ENCODE measurements at regions of chr10 and their contacts with region 1.

Region 1: GRCh38 chr10:100373298-100374136 is 26.5 kb downstream of the SCD start:
- DNase-seq: peak; percentile 99
- ATAC-seq: peak; percentile 83
- H3K4me3 Mint-ChIP-seq: no peak overlapping the region
- H3K27ac Mint-ChIP-seq: no peak overlapping the region
- H3K4me1 Mint-ChIP-seq: peaks cover 40% of the 10 kb centered on the region
- H3K27me3 Mint-ChIP-seq: no peaks in the 10 kb centered on the region

Region 2: GRCh38 chr10:99732033-99732912 is 641.2 kb before region 1 on chr10 and contains the starts of genes COX15 and CUTC:
- CTCF ChIA-PET with region 1: no interaction called
- POLR2A ChIA-PET with region 1: no interaction called
- intact Hi-C with region 1: loop called in 1 of 2 experiments (anchors 5 kb)
- DNase-seq: peak; percentile 97
- ATAC-seq: peak; percentile 94
- H3K4me3 Mint-ChIP-seq: peak within 1 kb of the TSS; percentile 93
- H3K27ac Mint-ChIP-seq: peak within 1 kb of the TSS; percentile 98
- H3K4me1 Mint-ChIP-seq: peaks cover 32% of the 10 kb centered on the region
- H3K27me3 Mint-ChIP-seq: no peaks in the 10 kb centered on the region
- total RNA-seq, gene COX15: 28.1 to 35.5 TPM
- total RNA-seq, gene CUTC: 24.6 to 35.8 TPM

Region 3: GRCh38 chr10:99926925-99927720 is 446.4 kb before region 1 on chr10:
- CTCF ChIA-PET with region 1: no interaction called
- POLR2A ChIA-PET with region 1: no interaction called
- intact Hi-C with region 1: no loop called
- DNase-seq: no peak
- ATAC-seq: no peak
- H3K4me3 Mint-ChIP-seq: no peak overlapping the region
- H3K27ac Mint-ChIP-seq: no peak overlapping the region
- H3K4me1 Mint-ChIP-seq: peaks cover 17% of the 10 kb centered on the region
- H3K27me3 Mint-ChIP-seq: no peaks in the 10 kb centered on the region

Region 4: DNA sequence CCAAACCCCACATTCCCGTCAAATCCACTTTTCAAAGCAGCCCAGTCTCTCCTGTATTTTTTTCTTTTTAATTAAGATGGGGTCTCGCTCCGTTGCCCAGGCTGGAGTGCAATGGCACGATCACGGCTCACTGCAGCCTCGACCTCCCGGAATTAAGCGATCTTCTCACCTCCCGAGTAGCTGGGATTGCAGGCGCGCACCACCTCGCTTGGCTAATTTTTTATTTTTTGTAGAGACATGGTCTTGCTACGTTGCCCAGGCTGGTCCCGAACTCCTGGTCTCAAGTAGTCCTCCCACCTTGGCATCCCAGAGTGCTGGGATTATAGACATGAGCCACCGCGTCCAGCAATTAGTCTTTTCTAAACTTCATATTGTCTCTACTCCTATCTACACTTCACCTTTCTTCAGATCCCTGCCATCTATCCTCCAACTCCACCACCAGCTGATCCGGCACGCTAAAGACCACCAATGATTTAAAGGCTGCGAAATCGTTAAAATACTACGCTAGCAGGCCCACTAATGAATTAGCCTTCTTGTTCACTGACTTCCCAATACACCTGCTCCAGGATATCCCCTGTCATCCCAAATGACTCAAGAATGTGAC is 143.6 kb before region 1 on chr10:
- CTCF ChIA-PET with region 1: no interaction called
- POLR2A ChIA-PET with region 1: no interaction called
- intact Hi-C with region 1: loop called in 1 of 2 experiments (anchors 2 kb)
- DNase-seq: no peak
- ATAC-seq: no peak
- H3K4me3 Mint-ChIP-seq: peak overlapping the region; percentile 84
- H3K27ac Mint-ChIP-seq: peak overlapping the region; percentile 78
- H3K4me1 Mint-ChIP-seq: peaks cover 19% of the 10 kb centered on the region
- H3K27me3 Mint-ChIP-seq: no peaks in the 10 kb centered on the region

Region 5: DNA sequence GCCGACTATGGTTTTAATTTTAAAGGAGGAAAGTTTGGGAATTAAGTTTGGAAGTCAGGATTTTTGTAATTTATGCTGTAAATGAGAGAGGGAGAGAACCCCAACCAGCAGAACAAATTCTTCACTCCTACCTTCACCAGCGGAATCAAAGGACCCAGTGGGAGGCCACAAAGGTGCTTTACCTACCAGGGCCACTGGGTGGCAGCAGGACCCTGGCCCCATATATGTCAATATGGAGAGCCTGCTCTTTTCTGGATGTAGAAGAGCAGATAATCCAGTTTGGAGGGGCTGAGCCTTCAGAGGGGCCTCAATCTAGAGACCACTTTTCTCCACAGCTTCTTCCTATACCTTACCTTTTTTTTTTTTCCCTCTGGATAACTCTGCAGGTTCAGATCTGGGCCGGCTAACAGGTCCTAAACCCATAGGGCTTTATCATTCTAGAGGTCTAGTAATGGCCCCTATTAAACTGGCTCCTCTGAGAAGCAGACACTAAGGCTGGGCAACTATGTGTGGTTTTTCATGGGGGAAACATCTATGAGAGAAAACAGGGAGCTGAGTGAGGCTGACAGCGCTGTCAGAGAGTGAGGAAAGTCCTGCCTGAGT is 35.0 kb before region 1 on chr10:
- CTCF ChIA-PET with region 1: interaction called, 10 read pairs
- POLR2A ChIA-PET with region 1: no interaction called
- intact Hi-C with region 1: no loop called
- DNase-seq: peak; percentile 90
- ATAC-seq: peak; percentile 85
- H3K4me3 Mint-ChIP-seq: no peak overlapping the region
- H3K27ac Mint-ChIP-seq: no peak overlapping the region
- H3K4me1 Mint-ChIP-seq: no peaks in the 10 kb centered on the region
- H3K27me3 Mint-ChIP-seq: no peaks in the 10 kb centered on the region

Region 6: DNA sequence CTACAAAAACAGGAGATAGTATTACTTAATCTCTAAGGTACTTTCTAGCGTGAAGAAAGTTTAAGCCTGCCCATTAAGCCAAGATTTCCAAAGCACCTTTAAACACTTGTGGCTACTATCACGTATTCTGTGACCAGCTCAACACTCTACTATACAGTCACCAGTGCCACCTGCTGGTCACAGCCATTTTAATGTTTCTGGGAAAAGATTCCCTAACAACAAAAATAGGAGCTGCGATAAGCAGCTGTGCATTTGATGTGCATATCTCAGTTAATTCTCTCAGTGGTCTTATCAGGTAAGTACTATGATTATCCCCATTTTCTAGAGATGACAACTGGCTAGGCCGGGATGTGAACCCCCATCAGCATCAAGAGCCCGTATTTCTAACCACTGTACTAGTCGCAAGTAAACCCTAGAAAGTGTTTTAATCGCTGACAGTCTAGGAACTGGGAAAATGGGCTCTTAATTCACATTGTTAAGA is 145.3 kb after region 1 on chr10:
- CTCF ChIA-PET with region 1: interaction called, 3 read pairs
- POLR2A ChIA-PET with region 1: interaction called, 14 read pairs
- intact Hi-C with region 1: no loop called
- DNase-seq: peak; percentile 82
- ATAC-seq: peak; percentile 76
- H3K4me3 Mint-ChIP-seq: no peak overlapping the region
- H3K27ac Mint-ChIP-seq: peak overlapping the region; percentile 47
- H3K4me1 Mint-ChIP-seq: peaks cover 13% of the 10 kb centered on the region
- H3K27me3 Mint-ChIP-seq: no peaks in the 10 kb centered on the region

Region 7: DNA sequence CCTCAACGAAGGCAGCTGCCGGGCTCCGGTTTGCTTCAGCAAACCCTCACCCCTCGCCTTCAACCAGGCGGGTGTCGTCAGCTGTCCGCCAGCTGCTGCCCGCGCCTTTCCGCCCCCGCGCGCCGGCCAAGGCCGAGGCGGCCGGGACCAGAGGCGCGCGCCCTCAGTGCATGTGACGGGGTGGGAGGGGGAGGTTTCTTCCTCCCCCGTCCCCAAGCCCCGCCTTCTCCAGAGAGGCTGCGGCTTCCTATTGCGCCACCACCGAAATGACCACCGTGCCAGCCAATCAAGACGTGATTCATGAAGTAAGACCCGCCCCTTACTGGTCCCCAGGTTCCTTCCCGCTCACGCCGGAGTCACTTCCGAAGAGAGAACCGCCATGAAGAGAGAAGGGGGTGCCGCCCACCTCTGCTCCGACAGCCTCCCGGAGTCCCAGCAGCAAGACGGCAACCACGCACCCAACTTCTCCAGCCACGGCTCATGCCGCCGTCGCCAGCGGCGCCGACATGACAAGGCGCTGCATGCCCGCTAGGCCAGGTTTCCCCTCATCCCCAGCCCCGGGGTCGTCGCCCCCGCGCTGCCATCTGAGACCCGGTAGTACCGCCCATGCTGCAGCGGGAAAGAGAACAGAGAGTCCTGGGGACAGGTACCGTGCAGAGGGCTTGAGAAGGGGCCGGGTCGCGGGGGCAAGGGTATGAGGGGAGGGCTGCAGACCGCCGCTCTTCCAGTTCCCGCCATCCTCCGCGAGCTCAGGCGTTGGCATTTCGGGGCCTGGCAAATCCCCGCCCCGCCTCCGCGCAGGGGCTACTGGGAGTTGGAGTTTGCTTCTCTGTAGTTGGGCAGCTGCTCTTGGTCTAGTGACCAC is 539.3 kb after region 1 on chr10 and contains the start of gene SLF2:
- CTCF ChIA-PET with region 1: no interaction called
- POLR2A ChIA-PET with region 1: no interaction called
- intact Hi-C with region 1: loop called in 1 of 2 experiments (anchors 5 kb)
- DNase-seq: peak; percentile 96
- ATAC-seq: peak; percentile 95
- H3K4me3 Mint-ChIP-seq: peak within 1 kb of the TSS; percentile 97
- H3K27ac Mint-ChIP-seq: peak within 1 kb of the TSS; percentile 98
- H3K4me1 Mint-ChIP-seq: peaks cover 45% of the 10 kb centered on the region
- H3K27me3 Mint-ChIP-seq: no peaks in the 10 kb centered on the region
- total RNA-seq, gene SLF2: 30.9 to 34.3 TPM

Measured in activated CD4-positive, alpha-beta T cell treated with anti-CD3 and anti-CD28 coated beads for 36 hours (primary cell).